Ascending aorta (tissue), 2 donors: ENCODE measurements at regions of chr3 and their contacts with region 1.

Region 1: DNA sequence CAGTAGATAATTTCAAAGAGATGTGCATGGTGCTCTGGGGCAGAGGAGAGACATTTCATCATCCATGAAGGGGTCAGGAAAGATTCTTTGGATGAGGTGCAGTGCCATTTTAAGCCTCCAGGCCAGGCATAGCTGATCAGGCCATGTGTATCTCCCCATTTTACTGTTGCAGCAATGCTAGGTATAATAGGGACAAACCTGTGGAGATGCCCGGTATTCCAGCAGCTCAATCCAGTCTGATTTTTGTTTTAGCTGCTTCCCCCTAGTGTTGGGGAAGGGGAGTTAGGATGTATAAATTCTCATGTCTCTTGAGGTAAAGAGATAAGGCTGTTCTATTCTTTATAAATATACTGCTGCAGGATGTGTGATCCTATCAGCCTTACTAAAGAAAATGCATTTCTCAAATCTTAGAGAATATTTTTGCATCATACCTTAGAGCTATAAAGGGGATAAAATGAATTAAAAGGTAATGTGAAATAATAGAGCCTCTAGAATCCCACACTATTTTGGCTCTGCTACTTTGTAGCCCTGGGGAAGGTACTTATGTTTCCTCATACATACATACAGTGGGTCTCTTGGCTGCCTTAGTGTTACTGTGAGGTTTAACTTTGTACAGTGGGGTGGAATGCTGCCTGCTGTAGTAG is 5.2 kb downstream of the CDV3 start:
- DNase-seq: no peak
- H3K4me3 ChIP-seq: peak overlapping the region in 1 of 2 donors; percentile 21
- H3K27ac ChIP-seq: no peak overlapping the region
- H3K4me1 ChIP-seq: peaks cover 18 to 38% of the 10 kb centered on the region in 2 donors
- H3K27me3 ChIP-seq: no peaks in the 10 kb centered on the region
- CTCF ChIP-seq: peak in 2 of 3 experiments; percentile 29 to 48

Region 2: DNA sequence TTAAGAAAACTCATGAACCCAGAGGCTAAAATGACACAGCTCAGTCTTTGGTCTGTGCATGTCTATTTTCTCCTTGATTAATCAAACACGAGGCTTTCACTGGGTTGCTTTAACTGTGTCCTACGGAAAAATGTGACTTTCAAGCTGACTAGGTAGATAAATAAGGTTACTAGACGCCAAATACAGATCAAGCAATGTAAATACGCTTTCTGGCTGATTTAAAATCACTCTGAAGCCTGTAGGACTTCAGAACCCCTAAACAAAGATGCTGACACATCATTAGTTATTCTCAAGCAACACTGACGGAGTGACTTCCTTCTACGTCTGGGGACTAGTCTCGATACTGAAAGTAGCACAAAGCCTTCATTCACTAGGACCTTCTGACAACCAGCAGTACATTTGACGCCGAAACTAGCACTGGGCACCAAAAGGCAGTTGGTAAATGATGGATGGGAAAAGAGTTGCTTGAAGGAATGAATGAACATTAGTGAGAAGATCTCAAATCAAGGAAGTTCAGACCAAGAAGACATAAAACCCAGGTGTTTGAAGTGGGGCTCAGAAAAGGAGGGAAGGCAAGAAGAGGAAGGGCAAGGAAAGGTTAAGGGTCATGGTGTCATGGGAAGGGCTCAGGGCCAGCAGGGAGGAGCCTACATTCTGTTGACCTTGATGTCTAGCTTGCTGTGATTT is 72.3 kb before region 1 on chr3:
- intact Hi-C with region 1: loop called (anchors 5 kb)
- DNase-seq: no peak
- H3K4me3 ChIP-seq: peak overlapping the region; percentile 6 to 39
- H3K27ac ChIP-seq: peak overlapping the region; percentile 17 to 39
- H3K4me1 ChIP-seq: peaks cover 0 to 5% of the 10 kb centered on the region in 2 donors
- H3K27me3 ChIP-seq: no peaks in the 10 kb centered on the region
- CTCF ChIP-seq: no peak